PC-9 (cell line): ENCODE measurements at regions of chr6 and their contacts with region 1.

Region 1: DNA sequence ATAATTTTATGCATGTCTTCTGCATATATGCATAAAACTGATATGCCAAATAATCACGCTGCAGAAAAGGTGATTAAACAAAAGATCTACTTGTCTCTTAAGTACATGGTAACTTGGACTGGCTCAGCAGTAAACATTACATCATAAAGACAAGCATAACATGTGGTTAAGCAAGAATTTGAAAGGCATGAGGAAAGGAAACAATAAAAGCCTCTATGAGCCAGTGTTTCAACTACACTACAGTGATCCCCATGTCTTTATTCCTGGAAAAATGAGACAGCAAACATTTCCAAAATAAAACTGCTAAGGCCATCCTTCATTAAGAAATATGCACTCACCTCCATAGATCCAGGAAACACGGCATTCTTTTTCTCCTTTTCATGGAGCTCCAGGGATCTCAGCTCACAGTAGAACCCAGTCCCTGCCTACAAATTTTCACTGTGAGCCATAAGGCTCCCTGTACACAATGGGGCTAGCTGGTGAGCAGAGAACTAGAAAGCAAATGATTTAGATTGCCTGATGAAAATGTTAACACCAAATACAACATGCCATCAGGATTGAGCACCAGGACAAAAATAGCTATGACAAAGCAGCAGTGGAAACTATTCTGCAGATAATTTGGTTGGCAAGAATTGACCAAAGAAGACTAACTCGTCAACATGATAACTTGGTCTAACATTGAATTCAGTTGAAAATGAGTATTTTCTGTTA is 156.1 kb downstream of the COL21A1 start:
- DNase-seq: peak; percentile 16 to 81
- H3K4me3 ChIP-seq: no peak overlapping the region
- H3K27ac ChIP-seq: peak overlapping the region; percentile 59
- H3K4me1 ChIP-seq: peaks cover 16% of the 10 kb centered on the region
- H3K27me3 ChIP-seq: no peaks in the 10 kb centered on the region
- CTCF ChIP-seq: no peak

Region 2: DNA sequence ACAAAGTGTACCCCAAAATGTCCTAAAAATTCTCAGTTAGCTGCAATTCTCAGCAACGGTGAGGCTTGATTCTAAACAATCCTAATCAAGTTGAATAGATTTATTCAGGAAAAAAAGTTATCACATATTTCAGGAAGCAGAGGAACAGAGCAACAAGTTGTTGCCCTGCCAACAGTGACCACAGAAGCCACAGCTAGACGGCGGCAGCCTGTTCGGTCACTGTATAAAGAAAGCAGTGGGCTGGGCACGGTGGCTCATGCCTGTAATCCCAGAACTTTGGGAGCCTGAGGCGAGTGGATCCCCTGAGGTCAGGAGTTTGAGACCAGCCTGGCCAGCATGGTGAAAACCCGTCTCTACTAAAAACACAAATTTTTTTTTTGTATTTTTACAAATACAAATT is 44.7 kb before region 1 on chr6:
- CTCF ChIA-PET with region 1: no interaction called
- POLR2A ChIA-PET with region 1: no interaction called
- intact Hi-C with region 1: loop called (anchors 2 kb)
- DNase-seq: peak in 1 of 2 experiments; percentile 81
- H3K4me3 ChIP-seq: no peak overlapping the region
- H3K27ac ChIP-seq: no peak overlapping the region
- H3K4me1 ChIP-seq: no peaks in the 10 kb centered on the region
- H3K27me3 ChIP-seq: no peaks in the 10 kb centered on the region
- CTCF ChIP-seq: no peak